Cardiac septum (tissue), 1 donor: ENCODE measurements at regions of chr4 and their contacts with region 1.

Region 1: GRCh38 chr4:145507636-145508035 is 26.0 kb downstream of the SMAD1 start:
- DNase-seq: no peak

Region 2: DNA sequence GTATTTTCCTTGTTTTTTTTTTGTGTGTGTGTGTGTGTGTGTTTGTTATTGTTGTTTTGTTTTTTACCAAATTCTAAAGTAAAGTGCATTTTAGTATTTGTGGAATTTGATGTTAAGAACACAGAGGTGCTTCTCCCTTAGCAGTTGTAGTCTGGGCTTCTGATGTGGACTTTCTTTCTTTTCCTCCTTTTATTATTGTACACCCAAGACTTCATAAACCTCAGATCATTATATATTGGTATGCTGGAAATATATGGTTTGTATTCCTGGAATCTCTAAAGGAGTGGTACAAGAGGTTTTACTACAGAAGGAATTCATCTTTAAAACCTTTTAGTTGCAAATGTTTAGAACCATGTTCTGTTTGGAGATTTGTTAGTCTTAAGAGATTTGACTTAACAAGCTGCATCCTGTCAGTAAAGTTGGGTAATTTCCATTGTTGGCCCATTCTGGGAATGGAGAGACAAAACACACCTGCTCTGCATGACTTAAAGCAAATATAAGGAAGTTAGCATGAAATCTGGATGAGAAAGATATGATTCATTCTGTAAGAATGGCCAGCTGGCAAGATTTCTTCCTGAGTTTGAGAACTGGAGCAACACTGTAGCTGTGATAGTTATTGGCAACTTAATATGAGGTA is 38.0 kb after region 1 on chr4:
- intact Hi-C with region 1: loop called (anchors 5 kb)
- DNase-seq: no peak